ENCODE measurements at regions of chr12 and their contacts with region 1.

Region 1: GRCh38 chr12:132083941-132084620 is 60.0 kb downstream of the DDX51 start:
- DNase-seq: peak; percentile 94
- ATAC-seq: peak; percentile 95
- H3K4me3 Mint-ChIP-seq: peak overlapping the region; percentile 86
- H3K27ac Mint-ChIP-seq: peak overlapping the region; percentile 91
- H3K4me1 Mint-ChIP-seq: peaks cover 23% of the 10 kb centered on the region
- H3K27me3 Mint-ChIP-seq: no peaks in the 10 kb centered on the region

Region 2: GRCh38 chr12:131928711-131929580 is 155.1 kb before region 1 on chr12 and contains the start of gene PUS1:
- CTCF ChIA-PET with region 1: no interaction called
- POLR2A ChIA-PET with region 1: no interaction called
- intact Hi-C with region 1: loop called in 1 of 2 experiments (anchors 1 kb)
- DNase-seq: peak; percentile 97
- ATAC-seq: peak; percentile 89
- H3K4me3 Mint-ChIP-seq: peak within 1 kb of the TSS; percentile 97
- H3K27ac Mint-ChIP-seq: peak within 1 kb of the TSS; percentile 85
- H3K4me1 Mint-ChIP-seq: peaks cover 25% of the 10 kb centered on the region
- H3K27me3 Mint-ChIP-seq: no peaks in the 10 kb centered on the region
- total RNA-seq, gene PUS1: 37.8 to 56.5 TPM

Region 3: DNA sequence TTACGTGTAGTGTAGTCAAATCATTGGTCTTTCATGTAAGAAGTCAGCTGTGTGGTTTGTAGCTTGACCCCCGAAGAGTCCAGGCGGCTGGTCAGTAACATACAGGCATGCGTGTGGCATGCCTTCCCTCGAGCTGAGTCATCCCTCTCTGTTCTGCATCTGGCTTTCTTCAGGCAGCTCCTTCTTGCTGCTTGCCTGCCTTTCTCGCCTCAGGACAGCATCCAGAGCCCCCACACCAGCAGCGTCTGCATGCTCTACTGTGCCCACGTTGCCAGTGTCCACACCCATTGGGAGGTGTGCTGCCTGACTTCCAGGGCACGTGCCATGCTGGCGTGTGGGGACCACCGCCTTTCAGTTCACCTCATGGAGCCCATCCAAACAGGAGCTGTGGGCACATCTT is 37.5 kb before region 1 on chr12:
- CTCF ChIA-PET with region 1: no interaction called
- POLR2A ChIA-PET with region 1: no interaction called
- intact Hi-C with region 1: no loop called
- DNase-seq: no peak
- ATAC-seq: no peak
- H3K4me3 Mint-ChIP-seq: no peak overlapping the region
- H3K27ac Mint-ChIP-seq: no peak overlapping the region
- H3K4me1 Mint-ChIP-seq: peaks cover under 1% of the 10 kb centered on the region
- H3K27me3 Mint-ChIP-seq: no peaks in the 10 kb centered on the region

Region 4: GRCh38 chr12:132133952-132134625 is 50.0 kb after region 1 on chr12:
- CTCF ChIA-PET with region 1: no interaction called
- POLR2A ChIA-PET with region 1: no interaction called
- intact Hi-C with region 1: no loop called
- DNase-seq: no peak
- ATAC-seq: no peak
- H3K4me3 Mint-ChIP-seq: no peak overlapping the region
- H3K27ac Mint-ChIP-seq: no peak overlapping the region
- H3K4me1 Mint-ChIP-seq: no peaks in the 10 kb centered on the region
- H3K27me3 Mint-ChIP-seq: no peaks in the 10 kb centered on the region

Region 5: DNA sequence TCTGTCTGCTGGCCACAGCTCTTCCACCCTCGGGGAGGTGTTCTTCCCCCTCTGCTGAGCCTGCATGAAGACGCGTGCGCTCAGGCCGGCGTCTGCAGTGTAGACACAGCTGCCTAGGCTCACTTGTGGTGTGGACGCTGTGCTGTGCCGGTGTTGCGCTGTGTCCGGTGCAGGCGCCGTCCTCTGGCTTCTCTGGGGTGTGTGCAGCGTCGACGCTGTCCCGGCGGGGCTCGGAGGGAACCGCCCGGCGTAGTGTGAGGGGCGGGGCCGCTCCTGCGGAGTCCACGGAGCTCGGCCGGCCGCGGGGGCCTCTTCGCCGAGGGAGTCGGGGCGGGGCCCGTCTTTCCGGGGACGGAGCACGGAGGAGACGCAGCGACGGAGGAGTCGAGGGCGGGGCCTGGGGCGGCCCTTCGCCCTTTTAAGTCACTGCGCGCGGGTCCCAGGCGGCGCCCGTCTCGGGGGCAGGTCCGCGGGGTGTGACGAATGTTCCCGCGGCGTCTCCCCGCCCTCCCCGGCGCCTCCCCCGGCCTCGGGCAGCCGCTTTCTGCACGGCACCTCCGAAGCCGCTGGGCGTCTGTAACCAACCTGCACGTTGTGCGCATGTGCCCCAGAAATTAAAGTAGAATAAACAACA is 105.4 kb after region 1 on chr12:
- CTCF ChIA-PET with region 1: no interaction called
- POLR2A ChIA-PET with region 1: no interaction called
- intact Hi-C with region 1: loop called in 1 of 2 experiments (anchors 1 kb)
- DNase-seq: peak; percentile 97
- ATAC-seq: peak; percentile 95
- H3K4me3 Mint-ChIP-seq: peak overlapping the region; percentile 78
- H3K27ac Mint-ChIP-seq: peak overlapping the region; percentile 79
- H3K4me1 Mint-ChIP-seq: peaks cover 28% of the 10 kb centered on the region
- H3K27me3 Mint-ChIP-seq: no peaks in the 10 kb centered on the region

Region 6: GRCh38 chr12:132710422-132711168 is 626.5 kb after region 1 on chr12 and contains the start of gene PGAM5:
- CTCF ChIA-PET with region 1: no interaction called
- POLR2A ChIA-PET with region 1: no interaction called
- intact Hi-C with region 1: loop called in 1 of 2 experiments (anchors 1 kb)
- DNase-seq: peak; percentile 92
- ATAC-seq: peak; percentile 92
- H3K4me3 Mint-ChIP-seq: peak within 1 kb of the TSS; percentile 75
- H3K27ac Mint-ChIP-seq: peak within 1 kb of the TSS; percentile 66
- H3K4me1 Mint-ChIP-seq: peaks cover 24% of the 10 kb centered on the region
- H3K27me3 Mint-ChIP-seq: no peaks in the 10 kb centered on the region
- total RNA-seq, gene PGAM5: 65.6 to 74.0 TPM